ENCODE measurements at regions of chr16 and their contacts with region 1.

Region 1: GRCh38 chr16:64455254-64455653 is 666.6 kb downstream of the CDH11 start:
- DNase-seq: peak; percentile 76
- ATAC-seq: peak; percentile 91
- H3K4me3 ChIP-seq: no peak overlapping the region
- H3K27ac ChIP-seq: no peak overlapping the region
- H3K4me1 ChIP-seq: peaks cover 27% of the 10 kb centered on the region
- H3K27me3 ChIP-seq: no peaks in the 10 kb centered on the region
- CTCF ChIP-seq: peak; percentile 67

Region 2: GRCh38 chr16:64362193-64362592 is 93.1 kb before region 1 on chr16:
- CTCF ChIA-PET with region 1: no interaction called
- POLR2A ChIA-PET with region 1: no interaction called
- intact Hi-C with region 1: loop called (anchors 10 kb)
- DNase-seq: peak; percentile 77
- ATAC-seq: peak; percentile 61
- H3K4me3 ChIP-seq: no peak overlapping the region
- H3K27ac ChIP-seq: no peak overlapping the region
- H3K4me1 ChIP-seq: peaks cover 48% of the 10 kb centered on the region
- H3K27me3 ChIP-seq: no peaks in the 10 kb centered on the region
- CTCF ChIP-seq: no peak

Region 3: DNA sequence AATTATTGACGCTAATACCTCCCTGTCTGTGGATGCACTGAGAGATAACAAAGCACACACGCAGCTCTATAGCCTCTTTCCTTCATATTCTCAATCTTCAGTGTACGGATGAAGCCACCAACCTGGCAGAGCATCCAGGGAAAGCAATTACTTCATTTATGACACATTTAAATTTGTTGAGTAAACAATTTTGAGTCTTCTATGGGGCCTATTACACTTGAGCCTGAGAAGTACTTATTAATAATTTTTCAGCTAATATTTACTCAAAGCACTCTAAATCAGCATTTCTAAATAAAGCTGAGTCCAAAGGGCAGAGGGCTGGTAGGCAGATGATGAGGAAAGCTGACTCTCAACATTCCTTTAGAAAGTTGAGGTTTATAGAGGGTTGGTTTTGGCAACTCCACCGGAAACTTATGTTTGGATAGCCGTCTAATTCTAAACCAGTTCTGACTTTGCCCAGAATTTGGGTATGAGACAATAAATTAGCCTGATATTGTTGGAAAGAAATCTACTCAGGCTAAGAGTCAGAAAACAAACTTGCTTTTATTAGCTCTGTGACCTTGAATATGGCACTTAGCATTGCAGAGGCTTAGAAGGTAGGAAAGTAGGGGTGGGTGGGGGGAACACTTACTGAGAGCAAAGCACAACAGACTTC is 23.1 kb after region 1 on chr16:
- CTCF ChIA-PET with region 1: no interaction called
- POLR2A ChIA-PET with region 1: no interaction called
- intact Hi-C with region 1: no loop called
- DNase-seq: peak; percentile 89
- ATAC-seq: peak; percentile 93
- H3K4me3 ChIP-seq: no peak overlapping the region
- H3K27ac ChIP-seq: peak overlapping the region; percentile 69
- H3K4me1 ChIP-seq: peaks cover 20% of the 10 kb centered on the region
- H3K27me3 ChIP-seq: 0 out of 2 replicates have a peak, but pooled peaks cover 2% of the 10 kb centered on the region
- CTCF ChIP-seq: no peak

Measured in PC-3 (cell line).